ENCODE measurements at regions of chr7 and their contacts with region 1.

Region 1: GRCh38 chr7:16564909-16565426 is 38.3 kb downstream of the LRRC72 start:
- DNase-seq: no peak
- ATAC-seq: peak; percentile 79

Region 2: GRCh38 chr7:16078076-16078952 is 486.7 kb before region 1 on chr7:
- intact Hi-C with region 1: loop called in 1 of 2 experiments (anchors 5 kb)
- DNase-seq: peak in 1 of 2 donors; percentile 6
- ATAC-seq: peak; percentile 78

Region 3: GRCh38 chr7:16234493-16235146 is 330.3 kb before region 1 on chr7:
- intact Hi-C with region 1: no loop called
- DNase-seq: no peak
- ATAC-seq: no peak

Region 4: GRCh38 chr7:16431646-16432424 is 133.1 kb before region 1 on chr7:
- intact Hi-C with region 1: loop called in 1 of 2 experiments (anchors 10 kb)
- DNase-seq: peak in 1 of 2 donors; percentile 31
- ATAC-seq: peak; percentile 88

Measured in left colon (tissue), 2 donors.